Activated T-helper 1 cell treated with anti-CD3 and anti-CD28 coated beads, Interleukin-12 subunit alpha, Interleukin-12 subunit beta, Interleukin-2, Interleukin-4 antibody, amounts not matched to agents 30 ng/mL and 10 ng/mL and 1 ng/mL, durations not matched to agents 14 hours and 24 hours and 36 hours (primary cell): ENCODE measurements at regions of chr16 and their contacts with region 1.

Region 1: GRCh38 chr16:67660564-67661028 is at the start of gene PARD6A:
- DNase-seq: peak; percentile 96
- H3K4me3 Mint-ChIP-seq: peak within 1 kb of the TSS; percentile 92
- H3K27ac Mint-ChIP-seq: peak within 1 kb of the TSS; percentile 97
- H3K4me1 Mint-ChIP-seq: peaks cover 20% of the 10 kb centered on the region
- H3K27me3 Mint-ChIP-seq: no peaks in the 10 kb centered on the region
- total RNA-seq, gene PARD6A: 13.4 and 16.1 TPM in 2 replicates

Region 2: DNA sequence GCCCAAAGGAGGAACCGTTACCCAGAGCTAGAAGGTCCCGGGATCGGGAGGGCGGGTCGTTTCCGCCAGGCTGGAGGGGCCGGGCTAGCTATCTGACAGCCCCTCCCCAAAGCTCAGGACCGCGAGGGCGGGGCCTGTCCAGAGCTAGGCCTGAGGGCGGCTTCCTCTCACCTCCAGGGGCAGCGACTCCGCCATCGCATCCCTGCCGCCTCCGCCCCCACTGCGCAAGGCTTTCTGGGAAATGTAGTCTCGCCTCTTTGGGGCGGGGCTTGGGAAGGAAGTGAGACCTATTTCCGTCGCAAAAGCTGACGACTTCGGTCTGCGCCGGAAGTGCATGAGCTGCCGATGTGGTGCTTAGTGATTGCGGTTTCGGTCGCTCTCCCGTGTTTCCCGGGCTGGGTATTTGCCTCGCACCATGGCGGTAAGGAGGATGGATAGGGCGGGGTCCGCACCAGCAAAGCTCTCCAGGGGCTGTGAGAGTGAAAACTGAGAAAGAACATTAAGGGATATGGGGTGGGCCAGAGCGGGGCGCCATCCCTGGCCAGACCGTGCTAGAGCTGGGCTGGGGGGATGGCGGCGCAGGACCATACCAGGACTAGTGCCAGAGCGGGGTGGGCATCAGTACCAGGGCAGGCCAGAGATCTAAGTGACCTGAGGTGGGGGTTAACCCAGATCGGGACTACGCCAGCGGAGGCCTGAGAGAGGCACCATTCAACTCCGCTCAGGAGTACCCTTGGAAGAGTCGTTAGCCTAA is 433.6 kb before region 1 on chr16 and contains the start of gene TMEM208:
- intact Hi-C with region 1: loop called (anchors 5 kb)
- DNase-seq: peak; percentile 99
- H3K4me3 Mint-ChIP-seq: peak within 1 kb of the TSS; percentile 98
- H3K27ac Mint-ChIP-seq: peak within 1 kb of the TSS; percentile 94
- H3K4me1 Mint-ChIP-seq: peaks cover 43% of the 10 kb centered on the region
- H3K27me3 Mint-ChIP-seq: no peaks in the 10 kb centered on the region
- total RNA-seq, gene TMEM208: 68.5 and 72.4 TPM in 2 replicates

Region 3: DNA sequence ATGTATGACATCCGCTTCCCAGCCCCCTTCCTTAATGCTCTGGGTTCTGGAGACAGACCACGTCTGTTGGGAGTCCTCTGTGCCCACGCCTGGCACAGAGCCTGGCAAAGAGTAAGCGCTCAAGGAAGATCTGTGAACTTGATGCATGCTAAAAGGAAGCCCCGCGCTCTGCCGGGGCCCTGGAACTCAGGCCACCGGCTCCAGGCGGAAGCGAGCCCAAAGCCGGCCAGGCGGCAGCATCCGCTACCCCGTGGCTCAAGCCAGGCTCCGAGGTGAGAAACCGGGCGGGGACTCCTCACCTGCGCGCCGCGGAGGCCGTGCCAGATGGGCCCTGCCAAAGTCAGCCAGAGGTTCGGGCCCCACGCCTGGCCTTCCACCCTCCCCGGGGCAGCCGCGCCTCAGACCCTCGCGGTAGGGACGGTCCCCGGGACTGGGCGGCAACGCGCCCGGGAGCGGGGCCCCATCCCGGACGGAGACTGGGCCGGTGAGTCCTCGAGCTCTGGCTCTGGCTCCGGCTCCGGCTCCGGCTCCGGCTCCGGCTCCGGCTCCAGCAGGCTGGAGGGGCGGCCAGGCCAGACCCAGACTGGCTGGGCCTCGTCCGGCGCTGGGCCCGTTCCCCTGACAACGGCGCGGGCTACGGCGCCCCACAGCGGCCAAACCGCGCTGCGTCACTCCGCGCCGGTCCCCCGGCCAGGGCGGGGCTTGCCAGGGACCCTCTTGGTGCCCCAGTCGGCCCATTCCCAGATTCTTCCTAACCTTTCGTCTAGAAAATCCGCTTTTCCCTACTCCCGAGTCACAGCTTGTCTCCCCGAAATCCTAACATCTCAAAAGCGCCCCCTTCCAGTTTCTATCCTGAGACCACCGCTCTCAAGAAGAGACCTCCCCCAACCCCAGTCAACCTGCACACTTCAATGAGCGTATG is 244.5 kb before region 1 on chr16 and contains the start of gene ZDHHC1:
- intact Hi-C with region 1: no loop called
- DNase-seq: peak; percentile 34
- H3K4me3 Mint-ChIP-seq: peak within 1 kb of the TSS; percentile 84
- H3K27ac Mint-ChIP-seq: peak within 1 kb of the TSS; percentile 50
- H3K4me1 Mint-ChIP-seq: peaks cover 10% of the 10 kb centered on the region
- H3K27me3 Mint-ChIP-seq: peaks cover 44% of the 10 kb centered on the region
- total RNA-seq, gene ZDHHC1: 0.76 and 0.88 TPM in 2 replicates

Region 4: GRCh38 chr16:67546761-67547422 is 113.7 kb before region 1 on chr16:
- intact Hi-C with region 1: loop called (anchors 2 kb)
- DNase-seq: peak; percentile 54
- H3K4me3 Mint-ChIP-seq: no peak overlapping the region
- H3K27ac Mint-ChIP-seq: peak overlapping the region; percentile 84
- H3K4me1 Mint-ChIP-seq: peaks cover 37% of the 10 kb centered on the region
- H3K27me3 Mint-ChIP-seq: no peaks in the 10 kb centered on the region

Region 5: GRCh38 chr16:67645397-67646121 is 15.0 kb before region 1 on chr16:
- intact Hi-C with region 1: loop called (anchors 1 kb)
- DNase-seq: no peak
- H3K4me3 Mint-ChIP-seq: peak overlapping the region; percentile 89
- H3K27ac Mint-ChIP-seq: peak overlapping the region; percentile 94
- H3K4me1 Mint-ChIP-seq: no peaks in the 10 kb centered on the region
- H3K27me3 Mint-ChIP-seq: no peaks in the 10 kb centered on the region

Region 6: GRCh38 chr16:67719048-67719777 is 58.6 kb after region 1 on chr16 and contains the start of gene GFOD2:
- intact Hi-C with region 1: loop called (anchors 1 kb)
- DNase-seq: peak; percentile 97
- H3K4me3 Mint-ChIP-seq: peak within 1 kb of the TSS; percentile 96
- H3K27ac Mint-ChIP-seq: peak within 1 kb of the TSS; percentile 94
- H3K4me1 Mint-ChIP-seq: peaks cover 33% of the 10 kb centered on the region
- H3K27me3 Mint-ChIP-seq: no peaks in the 10 kb centered on the region
- total RNA-seq, gene GFOD2: 19.6 and 20.3 TPM in 2 replicates

Region 7: GRCh38 chr16:67806428-67807147 is 146.0 kb after region 1 on chr16 and contains the starts of genes RANBP10 and TSNAXIP1:
- intact Hi-C with region 1: loop called (anchors 1 kb)
- DNase-seq: peak; percentile 96
- H3K4me3 Mint-ChIP-seq: peak within 1 kb of the TSS; percentile 90
- H3K27ac Mint-ChIP-seq: peak within 1 kb of the TSS; percentile 86
- H3K4me1 Mint-ChIP-seq: peaks cover 35% of the 10 kb centered on the region
- H3K27me3 Mint-ChIP-seq: peaks cover 3% of the 10 kb centered on the region
- total RNA-seq, gene RANBP10: 23.0 and 25.7 TPM in 2 replicates
- total RNA-seq, gene TSNAXIP1: 0.52 and 0.83 TPM in 2 replicates